ENCODE measurements at regions of chr19 and their contacts with region 1.

Region 1: DNA sequence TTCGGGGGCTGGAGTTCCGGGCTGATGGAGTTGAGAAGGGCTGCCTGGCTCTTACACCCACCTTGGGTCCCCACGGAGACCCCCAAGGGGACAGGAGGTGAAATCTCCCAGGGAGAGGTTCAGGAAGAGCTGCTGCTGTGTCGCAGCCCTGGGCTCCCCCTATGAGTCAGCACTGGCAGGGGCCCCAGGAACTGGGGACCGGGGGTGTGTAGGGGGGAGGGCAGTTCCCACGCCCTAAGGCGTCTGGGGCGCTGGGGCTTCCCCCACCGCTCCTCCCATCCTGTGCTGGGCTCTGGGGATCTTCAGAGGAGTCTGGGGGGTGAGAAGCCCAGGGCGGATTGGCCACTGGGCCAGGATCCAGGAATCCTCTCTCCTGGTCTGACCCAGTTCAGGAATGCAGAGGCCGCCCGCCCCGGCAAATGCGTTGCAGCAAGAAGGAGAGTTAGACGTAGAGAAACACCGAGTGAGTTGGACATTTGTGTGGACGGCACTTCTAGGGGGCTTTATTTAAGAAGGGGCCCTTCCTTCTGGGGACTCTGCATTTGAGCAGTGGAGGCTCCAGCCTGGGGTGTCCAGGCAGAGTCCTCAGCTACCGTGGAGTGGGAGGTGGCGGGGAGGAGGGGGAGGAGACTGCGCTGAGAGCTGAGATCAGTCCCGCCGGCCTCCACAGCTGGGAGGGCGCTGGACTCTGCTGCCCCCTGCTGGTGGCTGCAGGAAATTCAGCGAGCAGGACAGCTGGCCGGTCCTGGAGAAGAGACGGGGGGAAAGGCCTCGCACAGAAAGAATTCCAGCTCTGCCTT is 15.0 kb upstream of the NANOS3 start:
- DNase-seq: peak; percentile 96
- ATAC-seq: peak; percentile 95

Region 2: DNA sequence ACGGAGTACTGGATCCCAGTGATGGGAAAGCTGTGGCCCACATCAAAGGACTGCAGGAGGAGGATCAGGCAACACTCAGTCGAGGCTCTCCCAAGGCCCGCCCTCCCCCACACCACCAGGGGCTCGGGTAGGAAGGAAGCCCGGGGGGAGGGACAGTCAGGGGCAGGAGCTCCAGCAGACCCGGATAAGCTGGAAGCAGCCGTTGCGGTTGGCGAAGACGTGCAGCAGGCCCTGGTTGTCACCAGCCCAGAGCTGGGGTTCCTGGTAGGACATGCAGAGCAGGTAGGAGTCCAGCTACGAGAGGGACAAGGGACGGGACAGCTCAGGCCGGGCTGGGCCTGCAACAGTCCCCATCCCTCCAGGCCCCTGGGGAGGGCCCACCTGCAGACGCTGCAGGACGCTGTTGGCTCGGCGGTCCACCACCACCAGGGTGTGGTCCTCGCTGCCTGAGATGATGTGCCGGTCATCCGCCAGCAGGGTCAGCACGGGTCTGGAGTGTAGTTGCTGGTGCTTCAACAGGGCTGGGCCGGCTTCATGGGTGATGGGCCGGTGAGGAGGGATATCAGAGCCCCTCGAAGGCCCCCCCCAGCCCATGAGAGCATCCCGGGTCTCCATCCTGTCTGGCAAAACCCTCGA is 1172.2 kb before region 1 on chr19:
- intact Hi-C with region 1: no loop called
- DNase-seq: no peak
- ATAC-seq: no peak

Region 3: GRCh38 chr19:12994701-12995595 is 867.0 kb before region 1 on chr19 and contains the start of gene NFIX:
- intact Hi-C with region 1: no loop called
- DNase-seq: peak; percentile 86
- ATAC-seq: peak; percentile 39
- total RNA-seq, gene NFIX: 131 TPM

Region 4: GRCh38 chr19:13597640-13598039 is 264.3 kb before region 1 on chr19:
- intact Hi-C with region 1: loop called (anchors 10 kb)
- DNase-seq: no peak
- ATAC-seq: peak; percentile 79

Region 5: GRCh38 chr19:13774217-13775191 is 87.4 kb before region 1 on chr19 and contains the start of gene C19orf53:
- intact Hi-C with region 1: loop called (anchors 5 kb)
- DNase-seq: peak; percentile 93
- ATAC-seq: peak; percentile 99
- total RNA-seq, gene C19orf53: 63.0 TPM